AG04449 (cell line): ENCODE measurements at regions of chr5 and their contacts with region 1.

Region 1: DNA sequence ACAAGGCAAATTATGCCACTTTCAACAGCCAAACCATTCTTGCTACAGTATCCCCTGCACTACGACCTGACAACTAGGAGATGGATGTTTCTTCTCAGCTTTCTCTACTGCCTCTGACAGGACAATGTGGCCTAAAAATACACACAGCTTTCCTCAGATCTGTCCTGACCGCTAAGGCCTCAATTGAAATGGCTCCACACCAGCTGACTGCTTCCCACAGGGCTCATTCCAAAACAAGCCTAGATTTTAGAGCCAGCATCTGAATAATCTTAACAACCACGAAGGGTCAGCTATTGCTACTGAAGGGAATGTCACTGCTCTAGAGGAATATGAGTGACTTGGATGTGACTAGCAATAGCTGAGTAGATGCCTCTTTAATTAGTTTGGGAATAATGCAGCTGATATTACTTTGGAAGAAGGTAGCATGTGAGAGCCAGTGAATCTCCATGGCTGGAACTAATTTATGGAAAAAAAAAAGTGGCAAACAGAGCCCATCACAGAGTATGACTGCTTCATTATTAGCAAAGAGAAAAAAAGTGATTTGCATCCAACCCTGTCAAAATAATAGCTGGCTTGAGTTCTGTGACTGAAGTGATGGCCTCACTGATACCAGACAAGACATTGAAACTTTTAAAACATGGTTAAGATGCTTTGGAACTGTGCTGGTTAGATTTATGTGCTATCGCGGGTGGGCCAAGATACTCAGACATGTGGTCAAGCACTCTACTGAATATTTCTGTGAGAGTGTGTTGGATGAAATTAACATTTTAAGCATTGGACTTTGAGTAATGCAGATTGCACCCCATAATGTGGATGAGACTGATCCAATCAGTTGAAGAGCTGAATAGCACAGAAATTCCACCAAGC is 450.2 kb downstream of the NR2F1-AS1 start:
- DNase-seq: no peak
- H3K4me3 ChIP-seq: no peak overlapping the region
- CTCF ChIP-seq: no peak

Region 2: GRCh38 chr5:93107805-93108520 is 22.9 kb before region 1 on chr5:
- CTCF ChIA-PET with region 1: no interaction called
- POLR2A ChIA-PET with region 1: no interaction called
- DNase-seq: no peak
- H3K4me3 ChIP-seq: no peak overlapping the region
- CTCF ChIP-seq: no peak

Region 3: GRCh38 chr5:93120048-93120447 is 10.8 kb before region 1 on chr5:
- CTCF ChIA-PET with region 1: interaction called, 11 read pairs
- POLR2A ChIA-PET with region 1: no interaction called
- DNase-seq: no peak
- H3K4me3 ChIP-seq: no peak overlapping the region
- CTCF ChIP-seq: no peak